ENCODE measurements at regions of chr2 and their contacts with region 1.

Region 1: DNA sequence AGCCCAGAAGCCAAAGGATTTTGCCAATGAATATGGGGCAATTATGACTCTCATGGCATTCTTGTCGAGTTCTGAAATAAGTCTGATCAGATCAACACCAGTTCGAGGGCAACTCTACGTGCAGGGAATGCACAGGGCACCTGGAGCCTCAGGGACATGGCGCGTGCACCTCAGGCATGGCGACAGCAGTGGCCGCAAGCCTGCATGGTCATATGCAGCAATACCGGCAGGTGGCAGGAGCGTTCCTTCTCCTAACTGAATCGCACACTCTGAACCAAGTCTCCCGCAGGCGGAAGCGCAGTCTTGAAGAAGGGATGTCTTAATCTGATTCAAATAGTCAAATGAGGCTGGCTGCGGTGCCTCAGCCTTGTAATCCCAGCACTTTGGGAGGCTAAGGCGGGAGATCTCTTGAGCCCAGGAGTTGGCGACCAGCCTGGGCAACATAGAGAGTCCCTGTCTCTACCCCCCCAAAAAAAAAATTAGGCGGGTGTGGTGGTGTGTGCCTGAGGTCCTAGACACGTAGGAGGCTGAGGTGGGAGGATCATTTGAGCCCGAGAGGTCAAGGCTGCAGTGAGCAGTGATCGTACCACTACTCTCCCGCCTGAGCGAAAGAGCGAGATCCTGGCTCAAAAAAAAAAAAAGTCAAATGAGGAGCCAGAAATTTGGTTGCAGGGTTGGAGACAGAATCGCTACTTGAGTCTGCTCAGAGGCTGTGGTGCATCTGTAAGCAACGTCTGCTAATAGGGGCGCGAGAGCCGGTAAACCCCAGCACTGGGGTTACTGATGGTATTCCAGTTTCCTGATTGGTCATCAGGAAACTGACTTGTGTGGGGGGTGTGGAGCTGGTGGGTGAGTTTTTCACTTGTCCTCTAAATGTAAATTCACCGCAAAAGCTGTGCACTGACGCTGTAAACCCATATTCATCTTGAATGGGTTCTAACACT is 28.8 kb downstream of the FHL2 start:
- DNase-seq: peak; percentile 96
- H3K4me3 Mint-ChIP-seq: no peak overlapping the region
- H3K27ac Mint-ChIP-seq: peak overlapping the region; percentile 8
- H3K4me1 Mint-ChIP-seq: peaks cover 17% of the 10 kb centered on the region
- H3K27me3 Mint-ChIP-seq: no peaks in the 10 kb centered on the region

Region 2: DNA sequence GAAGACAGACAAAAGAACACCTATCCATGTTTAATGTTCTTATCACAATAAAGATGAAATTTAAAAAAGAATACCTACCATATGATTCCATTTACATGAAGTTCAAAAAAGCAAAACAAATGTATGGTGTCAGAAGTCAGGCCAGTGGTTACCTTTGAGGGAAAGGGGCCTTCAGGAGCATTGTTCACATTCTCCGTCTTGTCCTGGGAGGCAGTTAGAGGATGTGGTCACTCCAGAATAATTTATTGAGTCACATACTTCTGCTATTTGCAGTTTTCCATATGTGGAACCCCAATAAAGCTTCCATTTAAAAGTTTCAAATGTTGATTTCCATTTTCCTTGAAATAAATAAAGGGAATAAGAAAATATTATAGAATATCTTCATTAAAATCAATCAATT is 557.7 kb before region 1 on chr2:
- intact Hi-C with region 1: no loop called
- DNase-seq: no peak
- H3K4me3 Mint-ChIP-seq: no peak overlapping the region
- H3K27ac Mint-ChIP-seq: no peak overlapping the region
- H3K4me1 Mint-ChIP-seq: no peaks in the 10 kb centered on the region
- H3K27me3 Mint-ChIP-seq: peaks cover 2% of the 10 kb centered on the region

Region 3: DNA sequence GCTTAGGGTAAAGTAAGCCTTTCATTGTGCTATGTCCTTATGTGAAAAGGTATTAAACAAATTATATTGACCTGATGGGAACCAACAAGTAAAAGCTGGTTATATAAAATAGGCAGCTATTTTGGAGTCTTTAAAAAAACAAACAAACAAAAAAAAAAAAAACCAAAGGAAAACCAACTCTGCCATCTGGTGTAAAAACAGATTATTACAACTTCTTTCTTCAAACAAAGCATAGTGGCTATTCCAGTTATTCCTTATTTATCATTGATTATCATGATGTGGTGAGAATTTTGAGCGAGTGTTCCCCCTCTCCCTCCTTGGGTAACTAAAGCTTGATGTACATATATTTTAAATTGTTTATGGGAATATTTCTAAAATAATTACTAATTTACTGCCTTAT is 151.2 kb after region 1 on chr2:
- intact Hi-C with region 1: loop called (anchors 1 kb)
- DNase-seq: no peak
- H3K4me3 Mint-ChIP-seq: no peak overlapping the region
- H3K27ac Mint-ChIP-seq: no peak overlapping the region
- H3K4me1 Mint-ChIP-seq: no peaks in the 10 kb centered on the region
- H3K27me3 Mint-ChIP-seq: no peaks in the 10 kb centered on the region

Region 4: DNA sequence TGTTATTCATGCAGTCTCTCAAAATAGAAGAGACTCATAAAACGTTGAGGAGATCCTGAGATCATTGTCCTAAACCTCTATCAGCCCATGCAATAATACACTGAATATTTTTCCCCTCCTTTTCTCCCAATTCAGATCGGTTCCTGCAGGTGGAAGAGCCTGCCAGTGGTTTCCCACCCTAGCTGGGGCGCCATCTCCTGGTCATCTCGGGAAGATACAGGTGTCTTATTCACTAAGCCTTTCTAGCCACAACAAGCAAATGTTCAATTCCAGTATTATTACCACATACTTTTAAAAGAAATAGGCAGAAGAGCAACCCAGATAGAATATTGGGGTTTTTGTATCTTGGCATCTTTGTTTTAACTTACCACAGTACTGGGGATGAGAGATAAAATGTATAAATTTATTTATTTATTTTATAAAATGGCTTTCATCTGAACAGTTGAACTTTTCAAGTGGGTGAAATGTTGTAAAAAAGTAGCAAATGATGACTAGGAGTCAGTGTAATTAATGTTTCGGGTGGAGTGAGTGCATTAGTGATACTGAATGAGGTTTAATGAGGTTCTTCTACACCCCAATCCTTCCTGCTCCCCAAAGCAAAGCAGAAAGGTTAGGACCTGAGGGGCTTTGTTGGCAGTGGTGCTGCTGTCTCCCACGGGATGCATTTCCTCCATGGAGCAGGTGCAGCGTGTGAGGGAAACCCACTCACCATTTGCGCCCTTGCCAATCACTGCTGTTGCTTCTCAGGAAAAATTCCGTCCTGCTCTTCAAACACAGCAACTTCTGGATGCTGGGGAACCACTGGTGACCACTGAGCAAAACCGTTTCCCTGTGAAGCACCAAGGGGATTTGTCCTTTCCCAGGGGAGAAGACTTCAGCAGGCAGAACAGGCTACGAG is 176.0 kb after region 1 on chr2:
- intact Hi-C with region 1: loop called (anchors 2 kb)
- DNase-seq: peak; percentile 89
- H3K4me3 Mint-ChIP-seq: no peak overlapping the region
- H3K27ac Mint-ChIP-seq: no peak overlapping the region
- H3K4me1 Mint-ChIP-seq: peaks cover 4% of the 10 kb centered on the region
- H3K27me3 Mint-ChIP-seq: peaks cover 7% of the 10 kb centered on the region